ENCODE measurements at regions of chr10 and their contacts with region 1.

Region 1: DNA sequence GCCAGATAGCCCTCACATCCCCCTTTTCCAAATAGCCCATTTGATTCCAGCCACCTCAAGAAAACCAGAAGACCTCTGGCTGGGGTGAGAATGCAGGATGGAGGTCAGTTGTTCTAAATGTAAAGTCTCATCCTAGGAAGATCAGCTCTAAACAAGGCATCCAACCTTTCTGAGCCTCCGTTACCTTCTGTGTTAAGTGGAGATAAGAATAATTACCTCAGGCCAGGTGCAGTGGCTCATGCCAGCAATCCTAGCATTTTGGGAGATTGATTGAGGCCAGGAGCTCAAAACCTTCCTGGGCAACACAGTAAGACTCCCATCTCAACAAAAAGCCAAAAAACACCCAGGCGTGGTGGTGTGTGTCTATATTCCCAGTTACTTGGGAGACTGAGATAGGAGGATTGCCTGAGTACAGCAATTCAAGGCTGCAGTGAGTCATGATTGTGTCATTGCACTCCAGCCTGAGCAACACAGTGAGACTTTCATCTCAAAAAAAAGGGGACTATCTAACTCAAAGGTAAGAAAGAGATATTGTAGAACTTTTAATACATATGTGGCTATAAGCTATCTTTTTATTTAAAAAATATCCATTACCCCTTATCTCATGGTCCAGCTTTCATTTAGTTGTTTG is 43.5 kb downstream of the PRTFDC1 start:
- DNase-seq: no peak
- ATAC-seq: no peak
- H3K4me3 Mint-ChIP-seq: no peak overlapping the region
- H3K27ac Mint-ChIP-seq: no peak overlapping the region
- H3K4me1 Mint-ChIP-seq: peaks cover 21% of the 10 kb centered on the region
- H3K27me3 Mint-ChIP-seq: no peaks in the 10 kb centered on the region
- CTCF ChIP-seq: no peak

Region 2: GRCh38 chr10:24894309-24894708 is 14.6 kb before region 1 on chr10:
- CTCF ChIA-PET with region 1: no interaction called
- POLR2A ChIA-PET with region 1: interaction called, 10 read pairs
- intact Hi-C with region 1: no loop called
- DNase-seq: no peak
- ATAC-seq: no peak
- H3K4me3 Mint-ChIP-seq: peak overlapping the region; percentile 61
- H3K27ac Mint-ChIP-seq: peak overlapping the region; percentile 82
- H3K4me1 Mint-ChIP-seq: peaks cover 17% of the 10 kb centered on the region
- H3K27me3 Mint-ChIP-seq: no peaks in the 10 kb centered on the region
- CTCF ChIP-seq: no peak

Region 3: DNA sequence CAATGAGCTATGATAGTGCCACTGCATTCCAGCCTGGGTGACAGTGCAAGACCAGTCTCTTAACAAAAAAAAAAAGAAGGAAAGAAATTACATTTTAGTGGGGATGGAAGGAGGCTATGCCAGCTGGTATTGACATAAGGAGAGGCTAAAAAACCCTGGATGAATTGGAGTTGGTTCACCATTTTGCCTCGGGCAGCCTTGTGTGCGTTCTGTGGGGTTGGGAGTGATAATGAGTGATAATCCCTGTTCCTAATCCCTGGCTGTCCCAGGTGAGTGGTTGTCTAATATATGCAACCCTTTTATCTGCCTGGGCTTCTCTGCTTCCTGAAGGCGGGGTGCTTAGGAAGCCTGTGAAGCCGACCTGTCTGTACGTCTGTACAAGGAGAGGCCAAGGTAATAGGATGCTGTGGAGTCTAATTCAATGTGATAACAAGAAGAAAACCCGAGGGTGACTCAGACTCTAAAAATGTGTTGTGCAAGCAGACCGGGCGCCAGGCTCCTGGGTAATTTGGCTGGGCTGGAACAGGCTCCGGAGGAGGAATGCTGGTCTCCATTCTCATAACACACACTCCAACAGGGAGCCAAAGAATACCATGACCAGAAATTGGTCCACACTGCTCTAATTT is 151.0 kb after region 1 on chr10:
- CTCF ChIA-PET with region 1: no interaction called
- POLR2A ChIA-PET with region 1: no interaction called
- intact Hi-C with region 1: no loop called
- DNase-seq: no peak
- ATAC-seq: no peak
- H3K4me3 Mint-ChIP-seq: no peak overlapping the region
- H3K27ac Mint-ChIP-seq: no peak overlapping the region
- H3K4me1 Mint-ChIP-seq: peaks cover 3% of the 10 kb centered on the region
- H3K27me3 Mint-ChIP-seq: peaks cover 7% of the 10 kb centered on the region
- CTCF ChIP-seq: no peak

Region 4: GRCh38 chr10:25382029-25382810 is 473.3 kb after region 1 on chr10:
- CTCF ChIA-PET with region 1: no interaction called
- POLR2A ChIA-PET with region 1: no interaction called
- intact Hi-C with region 1: no loop called
- DNase-seq: no peak
- ATAC-seq: no peak
- H3K4me3 Mint-ChIP-seq: no peak overlapping the region
- H3K27ac Mint-ChIP-seq: no peak overlapping the region
- H3K4me1 Mint-ChIP-seq: no peaks in the 10 kb centered on the region
- H3K27me3 Mint-ChIP-seq: no peaks in the 10 kb centered on the region
- CTCF ChIP-seq: no peak